GM18951 (cell line): ENCODE measurements at regions of chr12 and their contacts with region 1.

Region 1: GRCh38 chr12:12319451-12320183 is 30.4 kb downstream of the MANSC1 start:
- POLR2A ChIP-seq: no peak

Region 2: DNA sequence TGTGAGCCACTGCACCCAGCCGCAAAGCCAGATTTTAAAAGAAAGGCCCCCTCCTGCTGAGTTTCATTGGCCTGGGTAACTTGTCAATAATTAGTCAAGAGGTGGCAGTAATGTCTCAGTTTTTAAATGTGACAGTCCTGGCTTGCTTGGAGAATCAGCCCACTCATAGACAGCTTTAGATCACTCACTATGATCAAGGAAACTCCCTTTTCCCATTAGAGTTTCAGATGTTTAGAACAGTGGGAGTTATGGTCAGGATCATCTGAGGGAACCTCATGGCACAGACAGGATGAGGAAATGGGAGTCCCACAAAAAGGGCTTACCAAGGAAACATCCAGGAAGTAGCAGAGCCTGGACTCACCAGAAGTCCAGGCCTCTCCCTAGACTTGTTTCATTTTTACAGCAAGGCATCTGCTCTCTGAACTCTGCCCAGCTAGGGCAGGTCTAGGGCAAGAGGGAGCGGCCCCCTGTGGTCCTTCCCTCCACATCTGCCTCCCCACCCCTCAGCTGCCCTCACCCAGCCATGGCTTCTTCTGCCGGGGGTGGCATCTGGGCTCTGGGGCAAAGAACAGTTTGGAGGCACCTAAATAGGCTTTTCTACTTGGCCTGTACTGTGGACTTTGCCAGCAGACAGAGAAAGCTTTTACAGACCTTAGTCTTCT is 237.7 kb before region 1 on chr12:
- in situ Hi-C with region 1: loop called (anchors 5 kb)
- POLR2A ChIP-seq: no peak